ENCODE measurements at regions of chr10 and their contacts with region 1.

Region 1: DNA sequence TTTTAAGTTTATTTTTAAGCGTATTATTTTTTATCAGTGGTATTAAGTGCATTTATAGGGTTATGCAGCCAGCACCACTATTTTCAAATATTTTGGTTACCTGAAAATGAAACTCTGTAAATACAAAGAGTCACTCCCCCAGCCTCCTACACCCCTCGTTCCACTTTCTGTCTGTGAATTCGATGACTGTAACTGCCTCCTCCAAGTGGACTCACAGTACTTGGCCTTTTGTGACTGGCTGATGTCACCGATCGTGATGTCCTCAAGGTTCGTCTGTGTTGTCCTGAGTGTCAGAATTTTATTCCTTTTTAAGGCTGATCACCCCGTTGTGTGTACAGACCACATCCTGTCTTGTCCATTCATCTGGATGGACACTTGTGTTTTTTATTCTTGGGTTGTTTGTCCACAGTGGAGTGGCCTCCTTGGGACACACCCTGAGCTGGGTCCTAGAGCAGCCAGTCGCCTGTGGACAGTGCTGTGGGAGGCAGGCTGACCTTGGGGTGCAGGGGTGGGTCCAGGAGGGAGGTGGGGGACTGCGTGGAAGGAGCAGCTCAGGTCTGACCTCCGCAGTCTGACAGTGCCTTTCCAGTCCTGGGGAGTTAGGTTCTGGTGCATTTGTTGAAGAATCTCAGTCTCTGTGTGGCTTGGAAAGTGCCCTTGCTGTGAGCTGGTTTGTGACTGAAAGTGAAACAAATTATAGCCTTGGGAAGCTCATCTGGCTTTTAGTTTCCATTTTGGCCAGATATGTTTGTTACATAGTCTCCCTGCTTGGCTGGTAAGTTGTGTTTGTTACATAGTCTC is 6.9 kb downstream of the MTG1 start:
- DNase-seq: peak; percentile 41
- ATAC-seq: peak; percentile 54
- H3K4me3 ChIP-seq: peak overlapping the region in 2 of 5 experiments; percentile 2 to 5
- H3K4me3 Mint-ChIP-seq: peak overlapping the region; percentile 53
- H3K27ac ChIP-seq: peak overlapping the region in 1 of 2 donors; percentile 42
- H3K27ac Mint-ChIP-seq: peak overlapping the region; percentile 54
- H3K4me1 ChIP-seq: peaks cover 19 to 20% of the 10 kb centered on the region in 2 donors
- H3K4me1 Mint-ChIP-seq: peaks cover 48% of the 10 kb centered on the region
- H3K27me3 ChIP-seq: no peaks in the 10 kb centered on the region
- H3K27me3 Mint-ChIP-seq: no peaks in the 10 kb centered on the region
- CTCF ChIP-seq: no peak

Region 2: GRCh38 chr10:133489816-133490588 is 89.2 kb after region 1 on chr10:
- CTCF ChIA-PET with region 1: no interaction called
- POLR2A ChIA-PET with region 1: no interaction called
- intact Hi-C with region 1: loop called (anchors 10 kb)
- DNase-seq: no peak
- ATAC-seq: no peak
- H3K4me3 ChIP-seq: no peak overlapping the region
- H3K4me3 Mint-ChIP-seq: no peak overlapping the region
- H3K27ac ChIP-seq: no peak overlapping the region
- H3K27ac Mint-ChIP-seq: no peak overlapping the region
- H3K4me1 ChIP-seq: no peaks in the 10 kb centered on the region
- H3K4me1 Mint-ChIP-seq: peaks cover 3% of the 10 kb centered on the region
- H3K27me3 ChIP-seq: peaks cover 0 to 3% (median 0%) of the 10 kb centered on the region in 4 experiments
- H3K27me3 Mint-ChIP-seq: peaks cover 5% of the 10 kb centered on the region
- CTCF ChIP-seq: no peak

Region 3: DNA sequence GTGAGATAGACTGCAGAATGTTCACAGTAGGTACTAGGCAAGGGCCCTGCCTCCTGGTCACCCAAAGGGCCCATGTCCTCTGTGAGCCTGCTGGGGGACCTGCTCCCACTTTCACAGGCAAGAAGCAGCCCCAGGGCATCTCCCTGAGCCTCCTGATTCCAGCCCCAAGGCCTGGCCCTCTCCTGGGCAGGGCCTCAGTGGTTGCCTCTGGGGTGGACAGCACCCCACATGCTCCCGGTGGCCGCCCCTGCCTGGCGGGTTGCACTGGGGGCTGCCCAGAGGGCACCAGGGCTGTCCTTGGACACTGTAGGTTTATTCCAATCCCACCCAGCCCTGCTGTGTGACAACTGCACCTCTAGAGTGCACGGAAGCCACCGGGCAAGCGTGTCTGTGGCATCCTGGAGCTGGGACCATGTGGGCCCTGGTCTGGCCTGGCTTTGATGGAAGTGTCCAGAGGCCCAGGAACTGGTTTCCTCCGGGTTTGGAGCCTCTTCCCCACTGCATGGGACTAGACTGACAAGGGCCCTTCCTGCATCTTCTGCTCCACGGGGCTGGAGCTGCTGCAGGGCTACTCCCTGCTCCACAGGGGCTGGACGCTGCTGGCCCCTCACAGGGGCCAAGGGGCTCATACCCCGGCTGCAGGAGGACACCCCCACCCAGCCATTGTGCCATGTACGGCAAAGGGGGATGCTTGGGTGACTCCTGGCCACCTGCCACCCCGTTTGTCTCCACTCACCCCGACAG is 189.6 kb after region 1 on chr10:
- CTCF ChIA-PET with region 1: no interaction called
- POLR2A ChIA-PET with region 1: no interaction called
- intact Hi-C with region 1: no loop called
- DNase-seq: no peak
- ATAC-seq: no peak
- H3K4me3 ChIP-seq: no peak overlapping the region
- H3K4me3 Mint-ChIP-seq: no peak overlapping the region
- H3K27ac ChIP-seq: no peak overlapping the region
- H3K27ac Mint-ChIP-seq: no peak overlapping the region
- H3K4me1 ChIP-seq: no peaks in the 10 kb centered on the region
- H3K4me1 Mint-ChIP-seq: no peaks in the 10 kb centered on the region
- H3K27me3 ChIP-seq: no peaks in the 10 kb centered on the region
- H3K27me3 Mint-ChIP-seq: peaks cover 29% of the 10 kb centered on the region
- CTCF ChIP-seq: no peak

Measured in B cell (primary cell).